ENCODE measurements at regions of chr7 and their contacts with region 1.

Region 1: DNA sequence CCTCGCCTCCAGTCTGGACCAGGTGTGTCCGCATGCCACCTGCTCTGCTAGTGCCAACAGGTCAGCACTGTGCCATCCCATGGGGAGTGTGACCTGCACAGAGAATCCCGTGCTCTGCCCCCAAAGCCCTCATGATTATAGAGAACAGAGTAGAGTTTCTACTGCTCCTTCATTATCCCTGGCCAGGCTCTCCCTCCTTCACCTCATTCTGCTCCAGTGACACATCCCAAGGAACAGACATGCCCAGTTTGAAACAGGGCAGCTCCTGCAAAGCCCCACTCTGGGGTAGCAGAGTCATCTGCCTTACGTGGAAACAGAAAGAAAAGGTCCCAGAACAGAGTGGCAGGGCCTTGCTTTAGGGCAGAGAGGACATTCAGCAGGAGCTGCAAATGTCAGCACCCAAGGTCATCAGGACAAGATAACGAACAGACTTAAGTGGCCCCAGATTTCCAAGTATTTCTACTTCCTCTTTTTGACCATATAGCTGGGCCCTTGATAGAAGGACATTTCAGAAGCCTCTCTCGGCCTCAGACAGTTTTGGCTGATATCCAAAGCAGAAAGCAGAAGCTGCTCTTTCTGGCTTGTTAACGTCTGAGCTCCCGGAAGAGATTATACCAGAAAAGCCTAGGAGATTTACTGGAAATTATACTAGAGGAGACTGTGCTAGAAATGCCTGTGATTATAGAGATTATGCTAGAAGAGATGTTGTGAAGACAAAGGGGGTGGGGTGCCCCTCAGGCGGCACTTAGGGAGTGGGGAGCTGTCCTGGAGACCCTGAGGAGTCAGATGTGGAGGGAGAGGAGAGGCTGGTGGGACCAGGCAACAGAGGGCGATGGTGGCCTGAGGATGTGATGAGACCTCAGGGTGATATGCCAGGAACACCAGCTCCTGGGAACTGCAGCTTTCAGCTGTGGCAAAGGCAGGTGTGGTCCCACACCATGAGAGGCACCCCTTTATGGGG is 12.6 kb downstream of the TMEM176B start:
- DNase-seq: peak in 2 of 5 donors; percentile 45
- ATAC-seq: peak; percentile 36 to 58 (median 38)
- H3K4me3 ChIP-seq: peak overlapping the region in 1 of 12 donors; percentile 17
- H3K27ac ChIP-seq: peak overlapping the region; percentile 68 to 95 (median 82)
- H3K4me1 ChIP-seq: peaks cover 4 to 68% (median 49%) of the 10 kb centered on the region in 12 donors
- H3K27me3 ChIP-seq: no peaks in the 10 kb centered on the region
- CTCF ChIP-seq: peak in 4 of 12 donors; percentile 9 to 21 (median 14)
- POLR2A ChIP-seq: no peak

Region 2: DNA sequence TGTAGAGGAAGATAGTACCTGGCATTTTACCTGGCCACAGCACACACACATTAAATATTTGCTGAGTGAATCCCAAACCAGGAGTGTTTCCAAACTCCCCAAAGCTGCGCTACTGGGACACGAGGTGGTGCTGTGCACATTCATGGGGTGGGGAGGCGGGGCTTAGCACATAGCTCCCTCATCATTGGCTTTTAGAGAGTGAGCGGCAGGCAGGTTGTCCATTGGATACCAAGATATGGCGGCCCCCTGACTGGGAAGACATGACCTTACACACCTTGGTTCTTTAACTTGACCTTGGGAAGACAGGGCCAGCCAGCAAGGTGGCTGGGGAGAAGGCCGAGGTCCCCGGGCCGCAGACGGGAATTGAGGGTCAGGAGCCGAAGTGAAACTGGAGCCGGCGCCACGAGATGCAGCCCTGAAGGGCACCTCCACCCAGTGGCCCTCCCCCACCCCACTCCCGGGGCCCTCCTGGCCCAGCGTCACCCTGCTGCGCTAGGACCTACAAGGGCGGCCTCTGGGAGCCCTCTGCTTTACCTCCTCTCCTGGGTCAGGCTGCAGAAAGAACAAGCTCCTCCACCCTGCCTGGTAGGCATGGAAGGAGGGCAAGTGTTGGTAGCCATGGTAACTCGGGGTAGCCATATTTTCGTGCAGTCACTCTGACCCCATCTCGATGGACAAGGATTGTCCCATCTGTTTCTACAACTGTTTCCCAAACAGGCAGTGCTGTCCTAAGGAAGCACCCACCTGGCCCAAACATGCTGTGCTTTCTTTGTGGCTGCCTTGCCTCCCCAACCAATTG is 37.0 kb after region 1 on chr7:
- intact Hi-C with region 1: loop called in 1 of 10 experiments (anchors 5 kb)
- DNase-seq: peak in 1 of 5 donors; percentile 37
- ATAC-seq: peak in 3 of 4 donors; percentile 37 to 44 (median 40)
- H3K4me3 ChIP-seq: no peak overlapping the region
- H3K27ac ChIP-seq: peak overlapping the region in 9 of 12 donors; percentile 4 to 82 (median 67)
- H3K4me1 ChIP-seq: peaks cover 0 to 39% (median 11%) of the 10 kb centered on the region in 12 donors
- H3K27me3 ChIP-seq: no peaks in the 10 kb centered on the region
- CTCF ChIP-seq: no peak
- POLR2A ChIP-seq: no peak